CD8-positive, alpha-beta memory T cell (primary cell): ENCODE measurements at regions of chr10 and their contacts with region 1.

Region 1: DNA sequence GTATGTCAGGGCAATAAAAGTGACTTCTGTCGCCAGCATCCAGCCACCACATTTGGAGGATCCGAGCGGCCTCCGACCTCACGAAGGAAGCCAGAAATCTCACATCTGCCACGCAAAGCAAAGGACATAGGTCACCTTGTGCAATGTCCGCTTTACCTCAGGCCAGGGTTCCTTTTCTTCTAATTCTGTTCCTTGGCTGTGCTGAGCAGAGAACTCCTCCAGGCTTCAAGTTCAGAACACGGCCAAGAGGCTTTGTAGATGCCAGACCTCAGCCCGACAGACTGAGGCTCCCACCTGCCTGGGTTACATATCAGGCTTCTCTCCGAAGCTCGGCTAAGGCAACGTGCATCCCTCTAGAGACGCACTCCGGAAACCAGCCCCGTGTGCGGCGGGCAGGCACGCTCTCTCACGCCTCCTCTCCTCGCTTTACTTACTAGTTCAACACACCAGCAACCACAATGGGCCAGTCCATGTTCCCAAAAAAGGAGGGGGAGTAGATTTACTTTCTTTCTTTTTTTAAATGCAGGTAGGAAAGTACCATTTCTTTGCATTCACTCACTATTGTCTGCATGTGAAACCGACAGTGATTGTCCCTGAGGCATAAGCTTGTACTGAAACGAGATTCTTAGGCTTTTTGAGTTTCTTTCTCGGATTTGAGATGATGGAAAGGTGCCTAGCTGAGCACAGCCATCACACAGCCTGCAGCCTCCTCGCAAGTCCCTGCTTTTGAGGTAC is 122.4 kb upstream of the AFAP1L2 start:
- DNase-seq: peak; percentile 78 to 95 (median 93)
- H3K4me3 ChIP-seq: peak overlapping the region; percentile 71
- H3K4me3 Mint-ChIP-seq: peak overlapping the region; percentile 91 to 96 (median 92)
- H3K27ac ChIP-seq: peak overlapping the region; percentile 82
- H3K27ac Mint-ChIP-seq: peak overlapping the region; percentile 95 to 100 (median 98)
- H3K4me1 ChIP-seq: peaks cover 56% of the 10 kb centered on the region
- H3K4me1 Mint-ChIP-seq: peaks cover 53 to 63% (median 61%) of the 10 kb centered on the region in 3 donors
- H3K27me3 ChIP-seq: no peaks in the 10 kb centered on the region
- H3K27me3 Mint-ChIP-seq: peaks cover 0 to 4% of the 10 kb centered on the region in 2 donors

Region 2: DNA sequence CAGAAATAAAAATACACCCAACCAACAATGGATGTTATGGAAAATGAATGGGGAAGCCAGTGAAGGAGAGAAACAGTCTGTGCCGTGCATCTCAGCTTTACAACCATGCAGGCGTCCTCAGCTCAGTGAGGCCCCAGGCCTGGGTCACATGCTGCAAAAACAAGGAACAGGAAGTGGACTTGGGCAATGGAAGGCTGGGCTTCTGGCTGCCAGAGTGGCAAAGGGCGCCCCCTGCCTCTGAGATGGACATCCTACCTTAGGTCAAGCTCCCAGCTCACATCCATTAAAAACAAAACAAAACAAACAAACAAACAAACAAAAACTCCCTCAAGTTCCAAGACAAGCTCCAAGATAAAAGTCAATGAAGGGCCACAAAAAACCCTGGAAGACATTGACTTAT is 67.7 kb before region 1 on chr10:
- CTCF ChIA-PET with region 1: no interaction called
- POLR2A ChIA-PET with region 1: no interaction called
- DNase-seq: no peak
- H3K4me3 ChIP-seq: no peak overlapping the region
- H3K4me3 Mint-ChIP-seq: no peak overlapping the region
- H3K27ac ChIP-seq: no peak overlapping the region
- H3K27ac Mint-ChIP-seq: no peak overlapping the region
- H3K4me1 ChIP-seq: no peaks in the 10 kb centered on the region
- H3K4me1 Mint-ChIP-seq: peaks cover 0 to 9% (median 4%) of the 10 kb centered on the region in 3 donors
- H3K27me3 ChIP-seq: no peaks in the 10 kb centered on the region
- H3K27me3 Mint-ChIP-seq: no peaks in the 10 kb centered on the region

Region 3: DNA sequence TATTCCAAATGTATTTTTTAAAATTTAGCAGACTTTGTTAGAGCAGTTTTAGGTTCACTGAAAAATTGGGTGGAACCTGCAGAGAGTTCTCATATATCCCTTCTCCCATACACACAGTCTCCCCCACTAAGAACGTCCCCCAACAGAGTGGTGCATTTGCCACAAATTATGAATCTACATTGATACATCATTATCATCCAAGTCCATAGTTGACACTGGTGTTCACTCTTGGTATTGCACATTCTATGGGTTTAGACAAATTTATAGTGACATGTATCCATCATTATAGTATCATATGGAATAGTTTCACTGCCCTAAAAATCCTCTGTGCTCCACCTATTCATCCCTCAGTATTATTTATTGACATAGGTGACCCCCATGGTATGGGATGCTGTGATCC is 25.0 kb before region 1 on chr10:
- CTCF ChIA-PET with region 1: no interaction called
- POLR2A ChIA-PET with region 1: no interaction called
- DNase-seq: no peak
- H3K4me3 ChIP-seq: no peak overlapping the region
- H3K4me3 Mint-ChIP-seq: peak overlapping the region in 3 of 7 donors; percentile 18 to 29 (median 24)
- H3K27ac ChIP-seq: no peak overlapping the region
- H3K27ac Mint-ChIP-seq: peak overlapping the region in 2 of 8 donors; percentile 37 to 77
- H3K4me1 ChIP-seq: peaks cover 84% of the 10 kb centered on the region
- H3K4me1 Mint-ChIP-seq: peaks cover 77 to 93% (median 93%) of the 10 kb centered on the region in 3 donors
- H3K27me3 ChIP-seq: no peaks in the 10 kb centered on the region
- H3K27me3 Mint-ChIP-seq: peaks cover 0 to 2% of the 10 kb centered on the region in 2 donors

Region 4: DNA sequence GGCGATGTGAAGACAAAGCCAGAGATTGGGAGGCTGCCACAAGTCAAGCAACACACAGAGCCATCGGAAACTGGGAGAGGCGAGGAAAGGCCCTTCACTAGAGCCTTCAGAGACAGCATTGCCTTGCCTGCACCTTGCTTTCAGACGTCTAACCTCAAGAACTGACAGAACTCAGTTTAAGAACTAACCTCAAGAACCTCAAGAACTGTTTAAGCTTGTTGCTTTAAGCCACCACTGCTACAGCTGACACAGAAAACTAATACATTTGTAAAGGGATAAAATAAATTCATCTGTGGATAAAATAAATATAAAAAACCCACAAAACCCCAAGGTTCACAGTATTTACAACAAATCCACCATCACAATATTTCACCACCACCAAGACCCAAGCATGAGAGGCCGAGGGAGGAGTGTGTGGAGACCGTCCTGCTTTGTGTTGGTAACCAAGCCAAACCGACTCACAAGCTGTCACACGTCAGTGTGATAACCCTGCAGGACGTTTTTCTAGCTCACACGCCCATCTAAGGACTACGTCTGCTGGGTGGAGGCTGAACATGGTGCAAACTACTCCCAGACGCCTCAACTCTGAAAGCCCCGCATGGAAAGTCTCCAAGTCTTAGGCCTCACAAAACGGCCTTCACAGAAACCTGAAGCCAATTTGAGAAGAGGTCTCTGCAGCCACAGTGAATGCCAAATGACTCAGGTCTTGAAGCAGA is 14.6 kb after region 1 on chr10:
- CTCF ChIA-PET with region 1: interaction called, 85 read pairs
- POLR2A ChIA-PET with region 1: interaction called, 53 read pairs
- DNase-seq: peak; percentile 54 to 92 (median 91)
- H3K4me3 ChIP-seq: peak overlapping the region; percentile 33
- H3K4me3 Mint-ChIP-seq: peak overlapping the region; percentile 50 to 89 (median 75)
- H3K27ac ChIP-seq: peak overlapping the region; percentile 82
- H3K27ac Mint-ChIP-seq: peak overlapping the region; percentile 97 to 100 (median 99)
- H3K4me1 ChIP-seq: peaks cover 96% of the 10 kb centered on the region
- H3K4me1 Mint-ChIP-seq: peaks cover 76 to 95% (median 84%) of the 10 kb centered on the region in 3 donors
- H3K27me3 ChIP-seq: no peaks in the 10 kb centered on the region
- H3K27me3 Mint-ChIP-seq: peaks cover 0 to 2% of the 10 kb centered on the region in 2 donors

Region 5: GRCh38 chr10:114550756-114551635 is 24.3 kb after region 1 on chr10:
- CTCF ChIA-PET with region 1: interaction called, 85 read pairs
- POLR2A ChIA-PET with region 1: interaction called, 4 read pairs
- DNase-seq: peak in 1 of 5 donors; percentile 39
- H3K4me3 ChIP-seq: no peak overlapping the region
- H3K4me3 Mint-ChIP-seq: no peak overlapping the region
- H3K27ac ChIP-seq: no peak overlapping the region
- H3K27ac Mint-ChIP-seq: peak overlapping the region in 5 of 8 donors; percentile 7 to 64 (median 42)
- H3K4me1 ChIP-seq: peaks cover 25% of the 10 kb centered on the region
- H3K4me1 Mint-ChIP-seq: peaks cover 14 to 33% (median 31%) of the 10 kb centered on the region in 3 donors
- H3K27me3 ChIP-seq: no peaks in the 10 kb centered on the region
- H3K27me3 Mint-ChIP-seq: peaks cover 0 to 3% of the 10 kb centered on the region in 2 donors

Region 6: GRCh38 chr10:114821293-114821914 is 294.7 kb after region 1 on chr10 and contains the start of gene FHIP2A:
- CTCF ChIA-PET with region 1: interaction called, 14 read pairs
- POLR2A ChIA-PET with region 1: interaction called, 4 read pairs
- DNase-seq: peak; percentile 76 to 89 (median 83)
- H3K4me3 ChIP-seq: peak within 1 kb of the TSS; percentile 70
- H3K4me3 Mint-ChIP-seq: peak within 1 kb of the TSS; percentile 93 to 98 (median 97)
- H3K27ac ChIP-seq: peak within 1 kb of the TSS; percentile 51
- H3K27ac Mint-ChIP-seq: peak within 1 kb of the TSS; percentile 92 to 98 (median 96)
- H3K4me1 ChIP-seq: peaks cover 20% of the 10 kb centered on the region
- H3K4me1 Mint-ChIP-seq: peaks cover 39 to 57% (median 57%) of the 10 kb centered on the region in 3 donors
- H3K27me3 ChIP-seq: no peaks in the 10 kb centered on the region
- H3K27me3 Mint-ChIP-seq: peaks cover 0 to 1% of the 10 kb centered on the region in 2 donors
- total RNA-seq, gene FHIP2A: 20.0 to 23.2 TPM